Posterior vena cava (tissue), 2 donors: ENCODE measurements at regions of chr11 and their contacts with region 1.

Region 1: DNA sequence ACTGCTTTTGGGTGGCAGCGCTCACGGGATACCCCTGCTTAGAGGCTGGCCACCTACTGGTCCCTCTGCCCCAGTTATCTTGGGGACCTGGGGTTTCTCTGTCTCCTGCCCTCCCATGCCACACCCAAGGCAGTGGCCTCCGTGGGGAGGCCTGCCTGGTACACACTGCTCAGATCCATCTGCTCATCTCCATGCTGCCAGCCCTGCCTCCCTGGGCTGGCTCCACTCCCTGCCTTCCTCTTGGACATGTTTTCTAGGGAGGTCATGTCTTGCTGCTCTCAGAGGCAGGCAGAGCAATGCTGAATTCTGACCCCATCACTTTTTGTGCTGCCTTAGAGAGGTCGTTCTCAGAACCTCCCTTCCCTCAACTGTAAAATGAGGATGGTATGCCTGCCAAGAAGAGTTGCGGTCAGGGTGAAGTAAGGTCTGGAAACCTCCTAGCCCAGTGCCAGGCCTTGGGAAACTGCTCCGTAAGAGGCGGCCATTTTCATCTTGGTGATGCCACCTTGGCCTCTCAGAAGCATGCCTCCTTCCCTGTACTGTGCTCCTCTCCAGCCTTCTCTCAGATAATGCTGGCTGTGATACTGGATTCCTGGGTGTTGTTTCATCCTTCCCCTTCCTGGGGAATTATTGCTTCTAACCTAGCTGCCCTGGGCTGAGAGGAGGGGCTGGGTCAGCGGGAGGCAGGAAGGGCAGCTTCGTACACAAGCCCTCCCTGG is 186.4 kb upstream of the ZBED5 start:
- DNase-seq: no peak

Region 2: DNA sequence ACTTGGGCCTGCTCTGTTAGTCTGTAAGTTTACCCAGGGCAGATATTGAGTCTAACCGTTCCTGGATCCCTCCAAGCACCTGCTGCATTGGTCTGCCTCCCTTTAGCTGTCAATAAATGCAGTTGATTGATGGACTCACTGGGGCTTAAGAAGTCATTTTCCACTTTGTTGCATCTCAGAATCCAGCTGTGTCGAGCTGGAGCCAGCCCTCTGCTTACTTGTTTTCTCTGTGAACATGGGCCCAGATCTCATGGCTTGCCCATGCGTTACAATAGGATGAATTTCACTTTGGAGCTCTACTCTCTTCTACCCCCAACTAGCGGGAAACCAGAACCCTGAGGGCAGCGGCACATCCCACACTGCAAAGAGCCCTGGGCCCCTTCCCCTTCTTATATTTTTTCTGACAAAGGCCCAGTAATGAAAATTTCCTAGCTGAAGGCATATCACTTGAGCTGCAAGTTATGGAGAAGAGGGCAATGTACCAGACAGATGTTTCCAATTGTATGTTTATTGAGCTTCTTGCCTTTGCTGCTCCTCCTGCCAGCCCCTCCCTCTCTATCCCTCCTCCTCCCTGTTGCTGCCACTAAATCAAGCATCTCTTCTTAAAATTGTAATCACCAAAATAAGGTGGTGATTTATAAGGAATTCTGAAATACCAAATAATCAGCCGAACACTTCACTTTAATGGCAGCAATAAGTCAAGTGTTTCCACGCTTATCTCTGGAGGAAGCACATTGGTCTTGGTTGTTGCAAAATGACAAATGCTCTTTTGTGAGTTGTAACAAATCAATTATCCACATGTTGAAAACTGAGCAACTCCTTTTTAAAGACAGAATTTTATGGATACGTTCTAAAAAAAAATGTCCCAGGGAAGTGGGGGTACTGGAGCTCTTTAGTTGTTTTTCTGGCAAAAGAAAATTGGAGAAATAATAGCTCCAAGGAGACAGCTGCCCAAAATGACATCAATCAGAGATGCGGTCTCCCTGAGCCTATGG is 25.8 kb after region 1 on chr11:
- intact Hi-C with region 1: no loop called
- DNase-seq: no peak

Region 3: DNA sequence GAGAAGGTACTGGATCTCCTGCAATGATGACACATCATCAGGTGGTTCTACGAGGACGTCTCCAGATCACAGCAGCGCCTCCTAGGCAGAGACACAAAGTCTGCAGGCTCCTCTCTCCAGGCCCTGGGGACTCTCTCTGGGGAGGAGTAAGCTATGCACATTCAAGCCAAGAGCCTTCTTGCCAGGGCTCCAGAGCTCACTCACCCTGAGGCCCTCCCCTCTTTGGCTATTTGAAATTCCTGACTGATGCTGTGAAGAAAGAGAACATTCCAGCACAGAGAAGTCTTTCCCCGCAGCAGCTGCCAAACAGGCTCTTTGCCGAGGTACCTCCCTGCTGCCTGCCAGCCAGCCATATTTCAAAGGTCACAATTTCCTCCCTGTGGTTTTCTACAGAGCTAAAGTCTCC is 103.8 kb after region 1 on chr11:
- intact Hi-C with region 1: loop called (anchors 5 to 10 kb)
- DNase-seq: peak; percentile 95